Breast epithelium (tissue), 4 donors: ENCODE measurements at regions of chr11 and their contacts with region 1.

Region 1: DNA sequence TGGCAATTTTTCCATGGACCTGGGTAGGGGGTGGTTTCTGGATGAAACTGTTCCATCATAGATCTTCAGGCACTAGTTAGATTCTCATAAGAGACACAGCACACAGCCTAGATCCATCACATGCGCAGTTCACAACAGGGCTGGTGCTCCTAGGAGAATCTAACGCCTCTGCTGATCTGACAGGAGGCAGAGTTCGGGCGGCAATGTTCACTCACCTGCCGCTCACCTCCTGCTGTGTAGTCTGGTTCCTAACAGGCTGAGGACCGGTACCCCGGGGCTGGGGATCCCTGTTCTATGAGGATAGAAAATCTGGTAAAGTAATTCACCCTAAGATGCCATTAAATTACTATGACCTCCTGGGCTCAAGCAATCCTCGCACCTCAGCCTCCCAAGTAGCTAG is 318.0 kb downstream of the KIRREL3 start:
- DNase-seq: no peak
- H3K4me3 ChIP-seq: no peak overlapping the region
- H3K27ac ChIP-seq: no peak overlapping the region
- H3K4me1 ChIP-seq: no peaks in the 10 kb centered on the region
- H3K27me3 ChIP-seq: no peaks in the 10 kb centered on the region
- CTCF ChIP-seq: no peak
- POLR2A ChIP-seq: no peak

Region 2: GRCh38 chr11:126459691-126460281 is 222.8 kb before region 1 on chr11:
- intact Hi-C with region 1: no loop called
- DNase-seq: no peak
- H3K4me3 ChIP-seq: no peak overlapping the region
- H3K27ac ChIP-seq: no peak overlapping the region
- H3K4me1 ChIP-seq: no peaks in the 10 kb centered on the region
- H3K27me3 ChIP-seq: no peaks in the 10 kb centered on the region
- CTCF ChIP-seq: no peak
- POLR2A ChIP-seq: no peak

Region 3: DNA sequence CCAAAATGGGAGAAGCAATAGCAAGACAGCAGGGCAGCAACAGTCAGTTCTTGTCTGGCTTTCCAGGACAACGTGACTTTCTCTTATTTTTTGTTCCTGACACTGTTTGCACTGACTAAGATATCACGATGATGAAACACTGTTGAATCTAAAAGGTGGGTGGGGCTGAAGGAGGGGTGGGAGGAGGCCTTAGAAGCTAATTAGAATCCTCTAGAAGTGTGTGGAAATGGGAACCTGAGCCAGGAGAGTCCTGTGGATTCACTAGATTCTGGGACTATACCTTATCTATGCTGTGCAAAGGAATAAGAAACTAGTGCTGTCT is 26.8 kb before region 1 on chr11:
- intact Hi-C with region 1: loop called (anchors 1 kb)
- DNase-seq: no peak
- H3K4me3 ChIP-seq: no peak overlapping the region
- H3K27ac ChIP-seq: no peak overlapping the region
- H3K4me1 ChIP-seq: no peaks in the 10 kb centered on the region
- H3K27me3 ChIP-seq: no peaks in the 10 kb centered on the region
- CTCF ChIP-seq: no peak
- POLR2A ChIP-seq: no peak

Region 4: DNA sequence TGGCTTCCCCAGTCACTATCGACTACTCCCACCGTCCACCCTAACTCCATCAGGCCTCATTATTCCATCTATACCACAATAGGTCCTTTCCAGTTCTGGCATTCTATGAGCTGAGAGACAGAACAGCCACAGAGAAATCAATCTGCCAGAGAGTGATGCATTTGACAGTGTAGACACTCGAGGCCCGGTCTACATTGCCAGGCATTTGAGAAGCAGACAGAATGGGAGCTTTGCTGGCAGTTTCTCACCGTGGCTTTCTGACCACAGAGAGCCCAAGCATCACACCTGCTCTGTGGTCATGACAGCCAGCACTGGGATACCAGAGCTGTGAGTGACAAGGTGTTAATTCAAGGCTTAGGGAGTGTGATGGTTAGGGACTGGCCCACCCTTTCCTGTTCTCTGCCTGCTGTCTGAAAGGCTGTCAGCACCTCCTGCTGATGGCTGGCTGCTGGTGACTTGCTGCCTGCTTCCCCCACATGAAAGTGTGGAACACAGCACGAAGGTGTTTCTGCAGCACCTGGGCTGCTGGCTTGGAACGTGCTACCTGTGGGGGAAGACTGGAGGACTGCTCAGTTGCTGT is 180.2 kb after region 1 on chr11:
- intact Hi-C with region 1: no loop called
- DNase-seq: no peak
- H3K4me3 ChIP-seq: no peak overlapping the region
- H3K27ac ChIP-seq: no peak overlapping the region
- H3K4me1 ChIP-seq: no peaks in the 10 kb centered on the region
- H3K27me3 ChIP-seq: no peaks in the 10 kb centered on the region
- CTCF ChIP-seq: no peak
- POLR2A ChIP-seq: no peak